ENCODE measurements at regions of chr9 and their contacts with region 1.

Region 1: DNA sequence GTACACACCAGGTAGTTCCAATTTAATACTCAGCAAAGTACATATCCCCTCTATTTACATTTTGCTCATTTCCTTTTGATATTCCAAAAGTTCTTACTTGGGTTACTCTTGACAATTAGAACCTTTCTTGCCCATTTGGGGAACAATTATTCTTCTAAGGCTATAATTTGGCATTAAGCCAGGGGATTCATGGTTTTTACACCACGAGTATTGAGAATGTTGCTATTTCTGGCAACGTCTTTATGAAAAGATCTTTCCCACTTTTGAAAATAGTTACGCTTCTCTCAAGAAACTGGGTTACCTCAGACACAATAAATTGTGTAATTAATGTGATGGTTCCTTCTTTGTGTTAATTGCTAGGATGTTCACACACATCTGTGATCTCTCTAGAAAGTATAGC is 11.5 kb upstream of the CAAP1 start:
- DNase-seq: no peak
- ATAC-seq: no peak
- H3K4me3 ChIP-seq: no peak overlapping the region
- H3K27ac ChIP-seq: no peak overlapping the region
- H3K4me1 ChIP-seq: peaks cover 8% of the 10 kb centered on the region
- H3K27me3 ChIP-seq: no peaks in the 10 kb centered on the region
- CTCF ChIP-seq: no peak
- POLR2A ChIP-seq: no peak

Region 2: GRCh38 chr9:26955921-26956859 is 52.1 kb after region 1 on chr9 and contains the start of gene IFT74:
- intact Hi-C with region 1: loop called (anchors 10 kb)
- DNase-seq: peak; percentile 97 to 99 (median 98)
- ATAC-seq: peak; percentile 100
- H3K4me3 ChIP-seq: peak within 1 kb of the TSS; percentile 65 to 79
- H3K27ac ChIP-seq: peak within 1 kb of the TSS; percentile 60 to 90 (median 81)
- H3K4me1 ChIP-seq: peaks cover 18% of the 10 kb centered on the region
- H3K27me3 ChIP-seq: no peaks in the 10 kb centered on the region
- CTCF ChIP-seq: no peak
- POLR2A ChIP-seq: peak; percentile 44 to 84 (median 80)
- total RNA-seq, gene IFT74: 7.3 to 9.1 TPM

Region 3: DNA sequence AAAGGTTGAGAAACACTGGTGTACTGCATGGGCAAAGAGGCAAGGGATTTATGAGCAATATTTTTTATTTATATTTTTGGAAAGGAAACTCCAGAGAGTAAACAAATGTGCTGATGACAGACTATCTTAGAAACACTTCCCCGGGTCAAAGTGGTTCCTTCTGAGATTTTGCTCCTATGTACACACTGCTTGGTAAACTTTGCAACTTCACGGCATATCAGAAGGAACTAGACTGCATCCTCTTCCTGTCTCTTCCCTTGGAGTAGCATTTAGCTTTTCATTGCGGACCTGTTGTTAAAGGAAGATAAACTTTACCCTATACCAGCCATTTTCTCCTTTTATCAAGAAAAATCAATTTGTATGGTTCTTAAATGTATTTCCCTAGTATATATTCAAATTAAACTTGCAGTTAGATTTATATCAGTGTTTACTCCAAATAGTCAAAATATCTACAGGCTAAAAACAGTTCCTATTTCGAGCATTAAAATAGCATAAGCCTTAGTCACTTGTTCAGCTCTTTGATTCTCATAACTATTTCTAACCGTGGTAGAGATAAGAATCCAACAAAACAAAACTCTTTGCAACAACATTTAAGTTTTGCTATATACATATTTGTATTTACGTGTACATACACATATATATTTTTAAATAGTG is 149.4 kb after region 1 on chr9:
- intact Hi-C with region 1: no loop called
- DNase-seq: no peak
- ATAC-seq: no peak
- H3K4me3 ChIP-seq: no peak overlapping the region
- H3K27ac ChIP-seq: no peak overlapping the region
- H3K4me1 ChIP-seq: no peaks in the 10 kb centered on the region
- H3K27me3 ChIP-seq: no peaks in the 10 kb centered on the region
- CTCF ChIP-seq: no peak
- POLR2A ChIP-seq: no peak

Region 4: GRCh38 chr9:27447031-27447683 is 543.1 kb after region 1 on chr9:
- intact Hi-C with region 1: no loop called
- DNase-seq: no peak
- ATAC-seq: no peak
- H3K4me3 ChIP-seq: no peak overlapping the region
- H3K27ac ChIP-seq: no peak overlapping the region
- H3K4me1 ChIP-seq: peaks cover 7% of the 10 kb centered on the region
- H3K27me3 ChIP-seq: no peaks in the 10 kb centered on the region
- CTCF ChIP-seq: no peak
- POLR2A ChIP-seq: no peak